BJ (cell line): ENCODE measurements at regions of chr7 and their contacts with region 1.

Region 1: DNA sequence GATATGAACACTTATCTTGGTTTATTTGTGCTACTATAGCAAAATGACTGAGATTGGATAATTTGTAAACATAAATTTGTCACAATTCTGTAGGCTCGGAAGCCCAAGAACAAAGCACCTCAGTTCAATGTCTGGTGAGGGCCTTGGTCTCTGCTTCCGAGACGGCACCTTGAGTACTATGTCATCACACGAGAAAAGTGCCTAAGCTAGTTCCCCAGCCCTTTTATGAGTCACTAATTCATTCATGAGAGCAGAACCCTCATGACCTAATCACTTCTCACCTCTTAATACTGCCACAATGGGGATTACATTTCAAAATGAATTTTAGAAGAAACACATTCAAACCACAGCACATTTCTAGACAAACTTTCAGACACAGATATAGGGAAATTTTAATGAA is 52.0 kb upstream of the PRSS1 start:
- DNase-seq: no peak
- H3K4me3 ChIP-seq: no peak overlapping the region
- H3K27me3 ChIP-seq: no peaks in the 10 kb centered on the region
- CTCF ChIP-seq: no peak

Region 2: GRCh38 chr7:142375666-142376313 is 321.5 kb before region 1 on chr7:
- CTCF ChIA-PET with region 1: no interaction called
- POLR2A ChIA-PET with region 1: interaction called, 13 read pairs
- DNase-seq: no peak
- H3K4me3 ChIP-seq: no peak overlapping the region
- H3K27me3 ChIP-seq: no peaks in the 10 kb centered on the region; the same call in 1 of the 2 replicates
- CTCF ChIP-seq: peak; percentile 27; the same call in 1 of the 2 replicates

Region 3: DNA sequence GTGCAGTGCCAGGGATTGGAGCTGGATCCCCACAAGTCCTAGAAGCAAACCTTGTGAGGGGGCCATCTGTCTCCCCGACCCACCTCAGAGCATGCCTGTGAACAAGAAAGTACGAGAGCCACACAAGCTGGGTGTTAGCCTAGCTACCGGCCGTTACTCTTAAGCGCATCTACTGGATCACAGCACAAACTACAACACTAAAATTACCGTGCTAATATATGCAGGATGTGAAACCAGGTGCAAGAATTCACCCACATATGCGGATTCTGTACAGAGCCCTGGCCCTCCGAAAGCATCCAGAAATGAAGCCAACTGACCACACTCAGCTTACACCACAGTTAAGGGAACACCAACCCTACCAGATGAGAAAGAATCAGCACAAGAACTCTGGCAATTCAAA is 36.0 kb after region 1 on chr7:
- CTCF ChIA-PET with region 1: no interaction called
- POLR2A ChIA-PET with region 1: no interaction called
- DNase-seq: no peak
- H3K4me3 ChIP-seq: no peak overlapping the region
- H3K27me3 ChIP-seq: no peaks in the 10 kb centered on the region
- CTCF ChIP-seq: no peak

Region 4: GRCh38 chr7:142908921-142909890 is 211.9 kb after region 1 on chr7:
- CTCF ChIA-PET with region 1: no interaction called
- POLR2A ChIA-PET with region 1: no interaction called
- DNase-seq: no peak
- H3K4me3 ChIP-seq: no peak overlapping the region
- H3K27me3 ChIP-seq: no peaks in the 10 kb centered on the region
- CTCF ChIP-seq: 0 out of 2 replicates have a peak, but pooled peaks have one; percentile 21